Prostate gland (tissue), 2 donors: ENCODE measurements at regions of chr16 and their contacts with region 1.

Region 1: GRCh38 chr16:75385507-75386152 is 47.7 kb downstream of the CFDP1 start:
- DNase-seq: no peak
- H3K4me3 ChIP-seq: no peak overlapping the region
- H3K27ac ChIP-seq: no peak overlapping the region
- H3K4me1 ChIP-seq: no peaks in the 10 kb centered on the region
- H3K27me3 ChIP-seq: no peaks in the 10 kb centered on the region
- CTCF ChIP-seq: peak; percentile 47 to 90 (median 88)
- POLR2A ChIP-seq: no peak

Region 2: DNA sequence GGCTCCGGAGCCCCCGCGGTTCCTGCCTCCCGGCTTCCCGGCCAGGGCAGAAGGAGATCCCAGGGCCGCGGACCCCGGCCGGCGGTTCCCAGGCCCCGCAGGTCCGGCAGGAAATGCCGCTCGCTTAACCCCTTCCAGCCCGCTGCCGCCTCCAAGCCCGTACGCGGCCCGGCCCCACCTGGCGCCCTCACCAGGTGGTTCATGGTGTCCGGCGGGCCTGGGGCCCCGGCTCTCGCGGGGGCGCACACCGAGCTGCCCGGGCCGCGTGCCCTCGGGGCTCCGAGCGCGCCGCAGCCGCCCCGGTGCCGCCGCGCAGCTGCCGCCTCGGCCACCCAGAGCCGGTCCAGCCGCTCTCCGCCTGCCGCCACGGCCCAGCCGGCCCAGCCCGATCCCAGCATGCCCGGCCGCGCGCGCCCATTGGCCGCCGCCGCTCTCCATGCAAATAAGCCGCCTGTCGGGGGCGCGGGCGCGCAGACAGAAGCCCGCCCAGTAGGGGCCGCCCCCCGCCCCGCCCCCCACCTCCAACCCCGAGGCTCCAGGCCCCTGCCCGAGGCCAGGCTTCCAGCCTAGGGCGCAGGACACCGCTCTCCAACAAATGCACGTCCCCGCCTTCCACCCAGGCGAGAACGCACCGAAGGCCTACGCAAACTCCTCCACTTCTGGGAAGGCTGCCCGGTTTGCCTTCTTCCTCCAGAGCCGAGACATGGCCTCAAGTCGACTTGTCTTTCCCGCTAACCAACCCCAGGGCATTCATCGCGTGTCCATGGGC is 134.2 kb before region 1 on chr16 and contains the start of gene BCAR1:
- intact Hi-C with region 1: loop called (anchors 5 kb)
- DNase-seq: peak; percentile 88
- H3K4me3 ChIP-seq: peak within 1 kb of the TSS; percentile 81 to 85
- H3K27ac ChIP-seq: peak within 1 kb of the TSS; percentile 88 to 89
- H3K4me1 ChIP-seq: peaks cover 27% of the 10 kb centered on the region
- H3K27me3 ChIP-seq: no peaks in the 10 kb centered on the region
- CTCF ChIP-seq: peak in 1 of 4 experiments; percentile 17
- POLR2A ChIP-seq: peak; percentile 42
- total RNA-seq, gene BCAR1: 51.1 to 181 TPM